ENCODE measurements at regions of chr2 and their contacts with region 1.

Region 1: DNA sequence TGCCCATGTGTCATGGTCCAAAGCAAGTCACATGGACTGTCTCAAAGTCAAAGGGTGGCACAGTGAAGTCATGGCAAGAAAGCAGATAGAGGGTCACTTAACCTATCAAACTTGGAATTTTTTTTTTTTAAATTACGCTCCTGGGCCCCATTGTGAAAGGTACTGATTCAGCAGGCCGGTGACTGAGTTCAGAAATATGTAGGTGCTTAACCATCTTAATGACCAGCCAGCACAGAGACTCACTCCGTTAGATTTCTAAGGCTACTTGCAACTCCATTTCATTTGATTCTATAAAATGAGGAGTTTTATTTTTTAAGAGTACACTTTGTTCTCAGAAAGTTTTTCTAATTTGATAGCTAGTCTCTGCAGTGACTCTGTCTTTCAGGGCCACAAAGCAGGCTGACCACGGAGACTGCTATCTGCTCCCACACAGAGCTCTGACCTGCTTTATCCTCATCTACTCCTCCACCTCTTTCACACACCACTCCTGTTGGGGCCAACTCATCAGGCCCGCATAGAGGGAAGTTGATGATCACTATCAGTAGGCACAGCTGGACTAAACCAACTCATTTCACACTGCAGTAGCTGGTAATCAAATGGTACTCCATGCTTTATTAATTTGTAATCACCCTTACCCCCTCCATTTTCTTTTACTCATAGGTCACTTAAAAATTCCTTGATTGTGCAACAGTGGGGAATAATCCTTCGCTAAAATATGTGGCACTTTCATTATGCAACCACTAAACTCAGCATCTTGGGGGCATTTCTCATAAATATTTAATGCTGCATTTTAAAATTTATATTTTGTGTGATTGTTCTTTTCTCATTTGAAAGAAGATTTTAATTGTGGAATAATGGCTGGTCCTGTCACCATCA is 249.7 kb upstream of the GCFC2 start:
- DNase-seq: no peak
- ATAC-seq: no peak

Region 2: DNA sequence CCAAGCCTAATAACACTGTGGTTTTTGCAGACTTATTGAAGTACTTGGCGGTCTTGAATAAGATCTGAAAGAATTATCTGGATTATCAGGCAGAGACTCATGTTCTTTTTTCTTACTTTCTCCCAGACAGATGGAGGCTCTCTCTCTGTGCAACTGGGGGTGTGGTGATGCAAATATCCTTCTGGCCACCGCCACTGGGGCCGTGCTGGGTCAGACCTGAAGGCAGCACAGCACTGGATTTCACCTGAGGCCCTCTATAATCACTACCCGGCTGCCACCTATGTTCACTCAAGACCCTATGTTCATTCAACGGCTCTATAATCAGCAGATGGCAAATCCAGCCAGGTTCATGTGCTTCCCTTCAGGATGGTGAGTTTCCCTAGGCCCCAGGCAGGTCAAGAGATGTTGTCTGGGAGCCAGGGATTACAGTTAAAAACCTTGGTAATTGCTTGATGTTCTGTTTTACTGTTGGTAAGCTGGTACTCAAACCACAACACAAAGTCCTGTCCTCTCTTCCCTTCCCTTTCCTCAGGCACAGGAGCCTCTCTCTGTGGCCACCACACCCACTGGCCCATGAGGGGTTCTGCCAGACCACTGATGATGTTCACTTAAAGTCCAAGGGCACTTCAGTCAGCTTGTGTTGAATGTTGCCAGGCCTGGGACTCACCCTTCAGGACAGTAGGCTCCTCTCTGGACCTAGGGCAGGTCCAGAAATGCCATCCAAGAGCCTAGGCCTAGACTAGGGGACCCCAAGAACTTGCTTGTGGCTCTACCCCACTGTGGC is 44.3 kb before region 1 on chr2:
- intact Hi-C with region 1: loop called (anchors 5 kb)
- DNase-seq: no peak
- ATAC-seq: no peak

Region 3: DNA sequence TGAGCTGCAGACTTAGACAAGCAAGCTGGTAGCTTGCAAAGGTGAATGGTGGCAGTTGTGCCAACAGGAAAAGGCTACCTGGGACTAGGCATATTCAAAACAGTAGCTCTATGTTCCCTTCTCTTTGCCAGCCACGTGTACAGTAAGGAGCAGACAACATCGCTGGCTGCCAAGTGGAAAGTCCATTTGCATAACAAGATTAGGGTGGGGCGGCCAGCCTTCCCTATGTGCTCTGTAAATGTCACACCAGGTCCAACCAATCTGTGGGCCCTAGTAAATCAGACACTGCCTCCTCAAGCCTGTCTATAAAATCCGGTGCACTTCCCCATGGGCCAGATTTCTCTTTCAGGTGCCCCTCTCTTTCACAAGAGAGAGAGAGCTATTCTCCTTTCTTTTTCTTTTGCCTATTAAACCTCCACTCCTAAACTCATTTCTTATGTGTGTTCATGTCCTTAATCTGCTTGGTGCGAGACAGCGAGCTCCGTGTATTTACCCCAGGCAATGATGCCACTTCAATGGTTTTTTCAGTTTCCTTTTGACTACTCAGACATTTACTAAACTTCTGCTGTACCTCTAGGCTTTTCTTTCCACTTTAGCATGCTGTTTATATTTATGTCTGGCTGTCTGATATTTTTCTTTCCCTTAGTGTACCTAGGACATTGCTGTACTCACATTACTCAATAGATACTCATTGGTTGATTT is 47.8 kb after region 1 on chr2:
- intact Hi-C with region 1: no loop called
- DNase-seq: no peak
- ATAC-seq: no peak

Measured in Right ventricle myocardium superior (tissue), 1 donor.